ENCODE measurements at regions of chr10 and their contacts with region 1.

Region 1: GRCh38 chr10:77287647-77288120 is 349.9 kb downstream of the KCNMA1 start:
- DNase-seq: peak in 1 of 2 donors; percentile 56
- H3K4me3 ChIP-seq: no peak overlapping the region
- H3K27ac ChIP-seq: no peak overlapping the region
- H3K4me1 ChIP-seq: peaks cover 8 to 37% of the 10 kb centered on the region in 2 donors
- H3K27me3 ChIP-seq: no peaks in the 10 kb centered on the region
- CTCF ChIP-seq: no peak

Region 2: DNA sequence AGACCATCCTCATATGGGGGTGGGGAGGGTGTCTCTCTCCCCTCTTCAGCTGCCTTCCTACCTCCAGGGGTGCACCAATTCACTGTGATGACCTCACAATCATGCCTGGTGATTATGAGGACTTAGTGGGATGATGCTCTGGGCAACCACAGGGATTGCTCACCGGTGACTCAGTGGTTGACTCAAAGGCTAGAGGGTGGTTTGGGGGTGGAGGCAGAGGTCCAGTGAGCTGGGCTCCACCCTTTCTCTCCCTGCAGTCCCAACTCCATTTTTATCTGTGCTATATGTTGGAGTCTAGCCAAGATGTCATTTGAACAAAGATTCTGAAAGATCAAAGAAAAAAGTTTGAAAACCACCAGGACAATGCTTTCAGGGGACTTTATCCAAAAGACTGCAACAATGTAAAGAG is 63.0 kb after region 1 on chr10:
- intact Hi-C with region 1: loop called (anchors 5 kb)
- DNase-seq: peak; percentile 41 to 90
- H3K4me3 ChIP-seq: no peak overlapping the region
- H3K27ac ChIP-seq: peak overlapping the region; percentile 60 to 75
- H3K4me1 ChIP-seq: peaks cover 8 to 9% of the 10 kb centered on the region in 2 donors
- H3K27me3 ChIP-seq: no peaks in the 10 kb centered on the region
- CTCF ChIP-seq: peak in 1 of 3 experiments; percentile 5

Region 3: DNA sequence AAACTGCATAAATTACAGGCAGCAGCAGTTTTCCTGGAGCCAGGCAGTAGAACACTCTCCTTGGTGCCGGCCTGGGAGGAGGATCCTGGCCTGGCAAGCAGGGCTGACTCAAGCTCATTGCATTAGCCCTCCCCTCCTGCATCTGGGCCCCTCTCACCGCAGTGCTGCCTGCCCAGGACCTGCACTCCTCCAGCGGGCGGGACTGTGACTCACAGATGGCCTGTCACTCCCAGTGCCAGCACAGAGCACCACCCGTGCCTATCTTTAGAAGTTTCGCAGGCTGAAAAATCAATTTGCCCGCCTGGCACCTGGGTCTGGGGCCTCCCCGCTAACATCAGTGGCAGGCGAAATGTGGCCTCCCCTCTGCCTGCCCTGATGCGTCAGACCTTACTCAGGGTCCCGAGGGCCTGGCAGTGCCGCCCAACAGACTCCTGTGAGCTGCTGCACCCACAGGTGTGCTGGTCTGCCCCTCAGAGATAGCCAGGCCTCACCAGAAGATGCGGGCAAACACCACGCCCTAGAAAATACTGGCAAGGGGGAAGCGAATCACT is 226.2 kb after region 1 on chr10:
- intact Hi-C with region 1: no loop called
- DNase-seq: peak; percentile 70 to 94
- H3K4me3 ChIP-seq: no peak overlapping the region
- H3K27ac ChIP-seq: peak overlapping the region; percentile 82 to 86
- H3K4me1 ChIP-seq: peaks cover 6 to 36% of the 10 kb centered on the region in 2 donors
- H3K27me3 ChIP-seq: no peaks in the 10 kb centered on the region
- CTCF ChIP-seq: no peak

Measured in ascending aorta (tissue), 2 donors.